Activated naive CD4-positive, alpha-beta T cell treated with anti-CD3 and anti-CD28 coated beads, Interleukin-2, amount 10 ng/mL, durations not matched to agents 7 days and 5 days (primary cell): ENCODE measurements at regions of chr6 and their contacts with region 1.

Region 1: DNA sequence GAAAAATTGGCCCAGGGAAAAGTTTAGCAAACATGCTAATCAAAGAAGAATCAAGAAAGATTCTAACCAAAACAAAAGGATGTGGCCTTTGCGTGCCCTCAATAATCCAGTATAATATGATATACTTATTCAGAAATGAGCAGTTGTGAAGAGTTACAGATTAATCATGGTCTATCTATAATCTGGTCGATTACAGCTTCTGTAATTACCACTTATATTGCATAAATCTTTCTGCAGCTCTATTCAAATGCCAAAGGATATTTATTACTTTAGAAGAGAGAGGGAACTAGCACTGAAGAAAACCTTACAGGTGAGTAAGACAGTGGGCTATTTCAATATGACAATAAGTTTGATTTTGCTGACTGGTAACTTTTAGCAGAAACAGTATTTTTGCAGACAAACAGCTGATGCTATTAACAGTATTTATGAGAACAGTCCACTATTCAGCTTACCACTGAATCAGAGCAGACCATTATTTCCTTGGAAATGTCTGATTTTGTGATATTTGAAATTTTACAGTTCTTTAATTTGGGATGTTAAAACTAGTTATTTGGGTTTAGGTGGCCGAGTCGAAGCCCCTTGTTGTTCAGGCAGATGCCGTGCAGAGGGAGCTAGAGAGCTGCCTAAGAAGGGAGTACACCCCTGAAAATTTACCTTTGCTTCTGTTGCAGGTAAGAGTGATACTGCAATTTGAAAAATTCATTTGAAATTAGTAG is 92.2 kb downstream of the CEP57L1 start:
- DNase-seq: peak; percentile 73
- H3K4me3 Mint-ChIP-seq: no peak overlapping the region
- H3K27ac Mint-ChIP-seq: no peak overlapping the region
- H3K4me1 Mint-ChIP-seq: no peaks in the 10 kb centered on the region
- H3K27me3 Mint-ChIP-seq: peaks cover 31% of the 10 kb centered on the region

Region 2: DNA sequence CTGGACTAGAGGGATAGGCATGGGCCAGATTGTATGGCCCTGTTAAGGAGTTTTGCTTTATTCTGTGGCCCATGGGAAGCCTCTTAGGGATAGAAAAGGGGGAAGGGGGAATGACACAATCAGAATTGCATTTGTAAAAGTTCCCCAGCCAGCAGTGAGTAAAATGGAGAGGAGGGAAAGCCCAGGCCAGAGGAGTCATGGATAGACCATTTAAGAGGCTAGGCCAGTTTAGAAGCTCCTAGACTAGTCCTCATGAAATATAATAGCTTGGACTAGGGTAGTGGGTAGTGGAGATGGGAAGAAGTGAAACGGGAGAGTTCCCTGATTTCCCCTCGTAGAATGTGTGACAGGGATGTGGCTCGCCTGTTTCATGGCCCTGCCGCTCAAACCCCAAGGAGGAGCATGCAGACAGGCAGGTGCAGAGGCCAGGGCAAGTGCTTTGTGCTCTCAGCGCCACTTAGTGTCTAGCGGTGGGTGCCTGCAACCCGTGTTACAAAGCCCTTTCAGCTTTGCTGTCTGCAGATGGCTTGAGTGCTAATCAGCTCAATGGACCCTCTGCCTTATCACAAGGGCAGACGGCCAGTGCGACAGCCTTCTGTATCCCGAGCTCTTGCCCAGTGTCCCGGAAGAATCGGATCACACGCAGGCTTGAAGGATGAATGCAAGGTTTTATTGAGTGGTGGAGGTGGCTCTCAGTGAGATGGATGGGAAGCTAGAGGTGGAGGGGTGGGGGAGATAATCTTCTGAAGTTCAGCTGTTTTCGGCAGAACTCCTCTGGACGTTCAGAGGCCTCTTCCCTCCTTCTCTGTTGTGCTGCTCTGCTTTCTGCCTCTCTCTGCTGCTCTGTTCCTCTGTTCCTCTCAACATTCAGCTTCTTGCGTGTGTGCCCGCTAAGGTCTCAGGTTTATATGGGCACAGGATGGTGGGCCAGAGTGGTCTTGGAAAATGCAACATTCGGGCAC is 48.8 kb after region 1 on chr6:
- CTCF ChIA-PET with region 1: interaction called, 20 read pairs
- DNase-seq: peak; percentile 58
- H3K4me3 Mint-ChIP-seq: peak overlapping the region; percentile 29
- H3K27ac Mint-ChIP-seq: peak overlapping the region; percentile 72
- H3K4me1 Mint-ChIP-seq: peaks cover 32% of the 10 kb centered on the region
- H3K27me3 Mint-ChIP-seq: no peaks in the 10 kb centered on the region

Region 3: DNA sequence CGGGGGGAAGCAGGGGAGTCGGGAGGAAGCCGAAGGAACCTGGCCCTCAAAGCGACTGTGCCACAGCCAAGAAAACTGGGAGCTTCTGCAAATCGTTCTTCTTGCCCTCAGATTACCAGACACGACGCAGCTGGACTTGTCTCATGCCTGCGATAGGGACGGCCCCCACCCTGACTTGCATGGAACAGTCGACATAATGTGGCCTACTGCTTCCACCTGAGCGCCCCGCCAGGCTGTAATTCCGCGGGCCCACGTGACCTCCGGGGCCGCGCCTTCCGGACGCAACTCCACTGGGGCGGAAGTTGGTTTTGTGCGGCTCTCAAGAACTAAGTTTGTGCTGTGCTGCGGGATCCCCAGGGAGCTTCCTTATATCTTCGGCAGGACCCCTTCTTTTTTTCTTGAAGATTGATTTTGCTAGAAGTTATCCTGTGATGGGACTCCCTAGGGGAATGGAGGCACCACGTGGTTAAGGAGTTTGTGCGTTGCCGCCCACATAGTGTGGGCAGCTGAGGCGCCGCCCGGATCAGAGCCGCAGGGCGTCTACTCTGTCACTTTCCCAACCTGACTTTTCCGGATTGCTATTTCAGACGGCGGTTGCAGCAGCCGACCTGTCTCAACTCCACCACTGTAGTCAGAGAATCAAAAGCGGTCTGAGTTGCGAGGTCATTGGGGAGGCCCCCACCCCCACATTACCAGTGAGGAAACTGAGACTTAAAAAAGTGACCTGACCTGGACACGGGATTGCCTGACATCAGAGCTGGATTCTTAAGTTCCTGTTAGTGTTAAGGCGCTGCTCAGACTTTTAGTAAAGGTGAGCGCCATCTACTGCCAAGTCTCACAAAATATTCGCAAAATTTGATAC is 195.2 kb after region 1 on chr6:
- CTCF ChIA-PET with region 1: interaction called, 118 read pairs
- DNase-seq: peak; percentile 94
- H3K4me3 Mint-ChIP-seq: peak overlapping the region; percentile 94
- H3K27ac Mint-ChIP-seq: peak overlapping the region; percentile 100
- H3K4me1 Mint-ChIP-seq: peaks cover 41% of the 10 kb centered on the region
- H3K27me3 Mint-ChIP-seq: no peaks in the 10 kb centered on the region

Region 4: GRCh38 chr6:109440331-109441068 is 252.9 kb after region 1 on chr6 and contains the starts of genes PPIL6 and SMPD2:
- CTCF ChIA-PET with region 1: interaction called, 10 read pairs
- DNase-seq: peak; percentile 83
- H3K4me3 Mint-ChIP-seq: peak within 1 kb of the TSS; percentile 94
- H3K27ac Mint-ChIP-seq: peak within 1 kb of the TSS; percentile 87
- H3K4me1 Mint-ChIP-seq: peaks cover 29% of the 10 kb centered on the region
- H3K27me3 Mint-ChIP-seq: peaks cover 10% of the 10 kb centered on the region